CD8-positive, alpha-beta T cell (primary cell): ENCODE measurements at regions of chrX and their contacts with region 1.

Region 1: GRCh38 chrX:152941328-152942106 is 43.6 kb downstream of the ZNF185 start:
- DNase-seq: peak; percentile 77 to 95 (median 87)
- ATAC-seq: peak; percentile 98
- H3K4me3 ChIP-seq: peak overlapping the region; percentile 55 to 84
- H3K4me3 Mint-ChIP-seq: peak overlapping the region; percentile 81
- H3K27ac ChIP-seq: peak overlapping the region; percentile 55 to 74
- H3K27ac Mint-ChIP-seq: peak overlapping the region; percentile 89
- H3K4me1 ChIP-seq: peaks cover 16% of the 10 kb centered on the region
- H3K4me1 Mint-ChIP-seq: peaks cover 11% of the 10 kb centered on the region
- H3K27me3 ChIP-seq: no peaks in the 10 kb centered on the region
- H3K27me3 Mint-ChIP-seq: no peaks in the 10 kb centered on the region
- CTCF ChIP-seq: peak; percentile 69

Region 2: GRCh38 chrX:152958524-152959465 is 17.3 kb after region 1 on chrX:
- CTCF ChIA-PET with region 1: interaction called, 9 read pairs
- POLR2A ChIA-PET with region 1: interaction called, 4 read pairs
- intact Hi-C with region 1: loop called (anchors 1 kb)
- DNase-seq: peak; percentile 82 to 97 (median 90)
- ATAC-seq: peak; percentile 97
- H3K4me3 ChIP-seq: peak overlapping the region; percentile 29 to 34
- H3K4me3 Mint-ChIP-seq: peak overlapping the region; percentile 71
- H3K27ac ChIP-seq: peak overlapping the region; percentile 48 to 73
- H3K27ac Mint-ChIP-seq: peak overlapping the region; percentile 89
- H3K4me1 ChIP-seq: peaks cover 6% of the 10 kb centered on the region
- H3K4me1 Mint-ChIP-seq: peaks cover 5% of the 10 kb centered on the region
- H3K27me3 ChIP-seq: no peaks in the 10 kb centered on the region
- H3K27me3 Mint-ChIP-seq: no peaks in the 10 kb centered on the region
- CTCF ChIP-seq: peak; percentile 66

Region 3: GRCh38 chrX:153333768-153334645 is 392.5 kb after region 1 on chrX and contains the start of gene ZNF275:
- CTCF ChIA-PET with region 1: no interaction called
- POLR2A ChIA-PET with region 1: no interaction called
- intact Hi-C with region 1: loop called (anchors 1 to 5 kb)
- DNase-seq: peak; percentile 56 to 90 (median 78)
- ATAC-seq: peak; percentile 97
- H3K4me3 ChIP-seq: peak within 1 kb of the TSS; percentile 61 to 76
- H3K4me3 Mint-ChIP-seq: peak within 1 kb of the TSS; percentile 82
- H3K27ac ChIP-seq: peak within 1 kb of the TSS in 1 of 2 experiments; percentile 68
- H3K27ac Mint-ChIP-seq: peak within 1 kb of the TSS; percentile 79
- H3K4me1 ChIP-seq: peaks cover 40% of the 10 kb centered on the region
- H3K4me1 Mint-ChIP-seq: peaks cover 46% of the 10 kb centered on the region
- H3K27me3 ChIP-seq: no peaks in the 10 kb centered on the region
- H3K27me3 Mint-ChIP-seq: peaks cover under 1% of the 10 kb centered on the region
- CTCF ChIP-seq: no peak
- total RNA-seq, gene ZNF275: 11.3 to 11.6 TPM

Region 4: GRCh38 chrX:153507484-153508178 is 566.1 kb after region 1 on chrX:
- CTCF ChIA-PET with region 1: interaction called, 22 read pairs
- POLR2A ChIA-PET with region 1: interaction called, 3 read pairs
- intact Hi-C with region 1: loop called (anchors 1 to 5 kb)
- DNase-seq: peak; percentile 68 to 92 (median 82)
- ATAC-seq: peak; percentile 99
- H3K4me3 ChIP-seq: no peak overlapping the region
- H3K4me3 Mint-ChIP-seq: no peak overlapping the region
- H3K27ac ChIP-seq: no peak overlapping the region
- H3K27ac Mint-ChIP-seq: no peak overlapping the region
- H3K4me1 ChIP-seq: peaks cover 5% of the 10 kb centered on the region
- H3K4me1 Mint-ChIP-seq: no peaks in the 10 kb centered on the region
- H3K27me3 ChIP-seq: no peaks in the 10 kb centered on the region
- H3K27me3 Mint-ChIP-seq: no peaks in the 10 kb centered on the region
- CTCF ChIP-seq: peak; percentile 62

Region 5: GRCh38 chrX:153609917-153610428 is 668.5 kb after region 1 on chrX:
- CTCF ChIA-PET with region 1: no interaction called
- POLR2A ChIA-PET with region 1: interaction called, 3 read pairs
- intact Hi-C with region 1: loop called in 1 of 2 experiments (anchors 5 kb)
- DNase-seq: peak; percentile 57 to 87 (median 77)
- ATAC-seq: peak; percentile 89
- H3K4me3 ChIP-seq: peak overlapping the region; percentile 44 to 58
- H3K4me3 Mint-ChIP-seq: peak overlapping the region; percentile 87
- H3K27ac ChIP-seq: no peak overlapping the region
- H3K27ac Mint-ChIP-seq: peak overlapping the region; percentile 77
- H3K4me1 ChIP-seq: peaks cover 12% of the 10 kb centered on the region
- H3K4me1 Mint-ChIP-seq: peaks cover 18% of the 10 kb centered on the region
- H3K27me3 ChIP-seq: no peaks in the 10 kb centered on the region
- H3K27me3 Mint-ChIP-seq: no peaks in the 10 kb centered on the region
- CTCF ChIP-seq: peak; percentile 59

Region 6: DNA sequence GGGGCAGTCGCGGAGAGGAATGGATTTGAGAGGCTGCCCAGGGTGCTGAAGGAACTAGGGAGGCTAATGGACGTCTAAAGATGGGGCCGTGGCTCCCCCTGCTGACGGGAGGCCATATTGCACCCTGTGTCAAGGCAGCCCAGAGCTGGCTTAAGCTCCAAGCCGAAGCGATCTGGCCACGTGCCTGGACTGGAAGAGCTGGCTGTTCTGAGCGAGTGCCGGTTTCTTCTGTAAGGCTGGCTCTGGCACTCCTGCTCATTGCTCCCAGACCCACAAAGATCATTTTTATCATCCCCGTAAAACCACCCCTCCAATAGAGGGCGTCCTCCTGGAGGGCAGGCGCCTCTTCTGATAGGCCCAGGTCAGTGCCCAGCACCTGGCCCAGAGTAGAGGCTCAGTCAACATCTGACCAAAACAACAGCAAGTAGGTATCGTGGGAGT is 726.5 kb after region 1 on chrX:
- CTCF ChIA-PET with region 1: interaction called, 26 read pairs
- POLR2A ChIA-PET with region 1: no interaction called
- intact Hi-C with region 1: loop called in 1 of 2 experiments (anchors 1 kb)
- DNase-seq: peak; percentile 56 to 83 (median 74)
- ATAC-seq: peak; percentile 92
- H3K4me3 ChIP-seq: peak overlapping the region in 1 of 2 experiments; percentile 8
- H3K4me3 Mint-ChIP-seq: peak overlapping the region; percentile 68
- H3K27ac ChIP-seq: no peak overlapping the region
- H3K27ac Mint-ChIP-seq: no peak overlapping the region
- H3K4me1 ChIP-seq: no peaks in the 10 kb centered on the region
- H3K4me1 Mint-ChIP-seq: peaks cover 7% of the 10 kb centered on the region
- H3K27me3 ChIP-seq: no peaks in the 10 kb centered on the region
- H3K27me3 Mint-ChIP-seq: peaks cover 13% of the 10 kb centered on the region
- CTCF ChIP-seq: peak; percentile 64